WTC11 (cell line): ENCODE measurements at regions of chrX and their contacts with region 1.

Region 1: GRCh38 chrX:12901486-12901885 is 4.9 kb upstream of the TLR8 start:
- DNase-seq: peak; percentile 52
- ATAC-seq: peak; percentile 36
- H3K4me3 Mint-ChIP-seq: no peak overlapping the region
- H3K27ac Mint-ChIP-seq: no peak overlapping the region
- H3K4me1 Mint-ChIP-seq: peaks cover 17% of the 10 kb centered on the region
- H3K27me3 Mint-ChIP-seq: no peaks in the 10 kb centered on the region; the same call in 1 of the 2 replicates
- CTCF ChIP-seq: 0 out of 2 replicates have a peak, but pooled peaks have one; percentile 29

Region 2: DNA sequence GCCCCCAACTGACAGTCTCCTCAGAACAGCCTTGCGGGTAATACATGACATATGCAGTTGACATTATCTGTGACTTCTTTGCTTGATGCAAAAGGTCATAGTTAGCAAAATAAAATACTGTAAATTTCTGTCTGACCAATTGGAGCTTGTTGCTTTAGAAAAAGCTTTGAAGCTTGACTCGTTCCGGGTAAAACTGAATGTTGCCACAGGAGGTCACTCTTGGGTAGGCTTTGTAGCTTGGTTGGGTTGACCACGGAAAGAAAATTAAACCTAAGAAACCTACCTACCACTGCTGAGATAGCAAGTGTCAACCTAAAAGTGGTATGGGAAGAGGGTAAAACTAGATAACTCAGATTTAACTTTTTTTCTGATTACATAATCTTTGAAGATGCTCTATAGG is 87.1 kb before region 1 on chrX:
- CTCF ChIA-PET with region 1: interaction called, 37 read pairs
- POLR2A ChIA-PET with region 1: no interaction called
- DNase-seq: peak; percentile 28
- ATAC-seq: peak; percentile 26; the same call in 1 of the 2 replicates
- H3K4me3 Mint-ChIP-seq: no peak overlapping the region
- H3K27ac Mint-ChIP-seq: no peak overlapping the region
- H3K4me1 Mint-ChIP-seq: peaks cover 24% of the 10 kb centered on the region
- H3K27me3 Mint-ChIP-seq: no peaks in the 10 kb centered on the region
- CTCF ChIP-seq: 0 out of 2 replicates have a peak, but pooled peaks have one; percentile 28

Region 3: GRCh38 chrX:12919051-12919450 is 17.6 kb after region 1 on chrX:
- CTCF ChIA-PET with region 1: no interaction called
- POLR2A ChIA-PET with region 1: no interaction called
- DNase-seq: no peak
- ATAC-seq: no peak
- H3K4me3 Mint-ChIP-seq: no peak overlapping the region
- H3K27ac Mint-ChIP-seq: no peak overlapping the region
- H3K4me1 Mint-ChIP-seq: peaks cover 3% of the 10 kb centered on the region
- H3K27me3 Mint-ChIP-seq: no peaks in the 10 kb centered on the region
- CTCF ChIP-seq: no peak